WTC11 (cell line): ENCODE measurements at regions of chr5 and their contacts with region 1.

Region 1: GRCh38 chr5:103109277-103109676 is 10.7 kb downstream of the GIN1 start:
- DNase-seq: no peak
- ATAC-seq: peak; percentile 41
- H3K4me3 Mint-ChIP-seq: no peak overlapping the region
- H3K27ac Mint-ChIP-seq: 0 out of 2 replicates have a peak overlapping the region, but pooled peaks have one; percentile 20
- H3K4me1 Mint-ChIP-seq: peaks cover 24% of the 10 kb centered on the region
- H3K27me3 Mint-ChIP-seq: no peaks in the 10 kb centered on the region
- CTCF ChIP-seq: no peak

Region 2: GRCh38 chr5:102654559-102655349 is 454.5 kb before region 1 on chr5:
- CTCF ChIA-PET with region 1: no interaction called
- POLR2A ChIA-PET with region 1: no interaction called
- DNase-seq: no peak
- ATAC-seq: no peak
- H3K4me3 Mint-ChIP-seq: no peak overlapping the region
- H3K27ac Mint-ChIP-seq: no peak overlapping the region
- H3K4me1 Mint-ChIP-seq: peaks cover 24% of the 10 kb centered on the region
- H3K27me3 Mint-ChIP-seq: no peaks in the 10 kb centered on the region
- CTCF ChIP-seq: no peak

Region 3: DNA sequence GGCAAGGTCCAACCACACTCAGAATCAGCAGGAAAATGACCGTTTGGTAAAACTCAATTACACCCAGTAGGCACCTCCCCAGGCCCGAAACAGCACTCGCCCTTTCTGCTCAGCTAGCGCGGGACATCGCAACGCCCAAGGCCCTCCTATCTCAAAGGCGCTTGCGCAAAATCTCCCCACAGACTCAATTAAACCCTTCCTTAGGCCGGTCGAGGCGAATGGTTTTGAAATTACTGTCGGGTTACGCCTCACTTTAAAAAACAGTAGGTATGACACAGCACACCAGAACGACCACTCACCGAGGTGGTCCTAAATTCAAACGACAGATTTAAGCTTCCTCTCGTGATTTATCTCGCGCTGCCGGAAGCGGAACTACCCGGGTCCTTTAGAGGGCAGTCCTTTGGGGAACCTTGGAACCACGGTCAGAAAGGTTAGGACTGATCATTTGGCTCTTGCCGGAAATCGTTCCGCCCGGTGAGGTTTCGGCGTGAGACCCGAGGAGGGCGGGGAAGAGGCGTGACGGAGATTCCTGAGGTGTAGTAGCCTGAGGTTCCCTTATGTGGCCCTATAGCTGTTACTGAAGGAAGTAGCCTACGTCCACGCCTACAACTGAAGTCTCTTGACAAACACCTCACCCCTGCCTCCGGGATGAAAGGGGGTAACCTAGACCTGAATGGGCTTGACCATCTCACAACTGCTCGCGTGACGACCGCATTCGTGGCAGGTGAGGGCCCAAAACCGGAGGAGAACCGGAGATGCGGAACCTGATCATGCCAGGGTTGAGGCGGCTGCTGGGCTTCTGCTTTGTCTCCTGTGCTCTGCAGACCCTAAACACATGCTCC is 10.7 kb after region 1 on chr5 and contains the starts of genes GIN1 and PPIP5K2:
- CTCF ChIA-PET with region 1: no interaction called
- POLR2A ChIA-PET with region 1: interaction called, 13 read pairs
- DNase-seq: peak; percentile 97
- ATAC-seq: peak; percentile 95
- H3K4me3 Mint-ChIP-seq: peak within 1 kb of the TSS; percentile 98
- H3K27ac Mint-ChIP-seq: peak within 1 kb of the TSS; percentile 100
- H3K4me1 Mint-ChIP-seq: peaks cover 26% of the 10 kb centered on the region
- H3K27me3 Mint-ChIP-seq: no peaks in the 10 kb centered on the region
- CTCF ChIP-seq: no peak
- total RNA-seq, gene GIN1: 5.7 to 7.0 TPM (median 6.7 TPM) in 3 replicates
- total RNA-seq, gene PPIP5K2: 47.3 to 67.6 TPM (median 47.8 TPM) in 3 replicates

Region 4: GRCh38 chr5:103132684-103133083 is 23.4 kb after region 1 on chr5:
- CTCF ChIA-PET with region 1: no interaction called
- POLR2A ChIA-PET with region 1: no interaction called
- DNase-seq: no peak
- ATAC-seq: no peak
- H3K4me3 Mint-ChIP-seq: no peak overlapping the region
- H3K27ac Mint-ChIP-seq: no peak overlapping the region
- H3K4me1 Mint-ChIP-seq: no peaks in the 10 kb centered on the region
- H3K27me3 Mint-ChIP-seq: no peaks in the 10 kb centered on the region
- CTCF ChIP-seq: no peak

Region 5: DNA sequence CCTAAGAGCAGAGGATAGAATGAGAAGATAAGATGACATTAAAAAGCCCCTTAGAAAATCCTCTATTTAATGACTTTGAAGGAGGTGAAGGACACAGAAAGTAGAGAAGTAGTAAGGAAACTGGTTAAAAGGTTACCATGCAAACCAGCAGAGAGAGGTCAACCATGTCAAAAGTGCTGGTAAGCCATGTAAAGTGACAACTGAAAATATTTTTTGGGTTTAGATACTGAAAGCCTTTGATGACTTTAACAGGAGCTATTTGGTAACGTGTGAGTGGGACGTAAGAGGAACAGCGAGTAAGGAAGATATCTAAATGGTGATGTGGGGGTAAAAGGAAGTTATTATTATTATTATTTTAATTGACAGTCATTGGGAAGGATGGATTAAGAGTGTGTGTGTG is 206.2 kb after region 1 on chr5:
- CTCF ChIA-PET with region 1: no interaction called
- POLR2A ChIA-PET with region 1: no interaction called
- DNase-seq: no peak
- ATAC-seq: no peak
- H3K4me3 Mint-ChIP-seq: no peak overlapping the region
- H3K27ac Mint-ChIP-seq: no peak overlapping the region
- H3K4me1 Mint-ChIP-seq: no peaks in the 10 kb centered on the region
- H3K27me3 Mint-ChIP-seq: no peaks in the 10 kb centered on the region
- CTCF ChIP-seq: no peak